ENCODE measurements at regions of chr1 and their contacts with region 1.

Region 1: GRCh38 chr1:212162635-212163034 is 122.6 kb upstream of the PPP2R5A start:
- DNase-seq: peak; percentile 31 to 76
- ATAC-seq: peak; percentile 32 to 69 (median 57)
- H3K4me3 ChIP-seq: no peak overlapping the region
- H3K27ac ChIP-seq: peak overlapping the region in 9 of 10 donors; percentile 3 to 81 (median 42)
- H3K4me1 ChIP-seq: peaks cover 5 to 52% (median 39%) of the 10 kb centered on the region in 9 donors
- H3K27me3 ChIP-seq: no peaks in the 10 kb centered on the region
- CTCF ChIP-seq: no peak

Region 2: GRCh38 chr1:212070720-212071302 is 91.8 kb before region 1 on chr1:
- intact Hi-C with region 1: loop called in 3 of 10 experiments (anchors 5 kb)
- DNase-seq: no peak
- ATAC-seq: peak; percentile 52 to 83 (median 58)
- H3K4me3 ChIP-seq: no peak overlapping the region
- H3K27ac ChIP-seq: peak overlapping the region in 2 of 10 donors; percentile 0 to 58
- H3K4me1 ChIP-seq: peaks cover 0 to 39% (median 9%) of the 10 kb centered on the region in 9 donors
- H3K27me3 ChIP-seq: no peaks in the 10 kb centered on the region
- CTCF ChIP-seq: peak; percentile 66 to 91 (median 81)

Region 3: GRCh38 chr1:212077051-212077450 is 85.6 kb before region 1 on chr1:
- intact Hi-C with region 1: loop called in 3 of 10 experiments (anchors 5 kb)
- DNase-seq: no peak
- ATAC-seq: peak in 1 of 8 donors; percentile 34
- H3K4me3 ChIP-seq: no peak overlapping the region
- H3K27ac ChIP-seq: no peak overlapping the region
- H3K4me1 ChIP-seq: peaks cover 0 to 27% (median 5%) of the 10 kb centered on the region in 9 donors
- H3K27me3 ChIP-seq: no peaks in the 10 kb centered on the region
- CTCF ChIP-seq: no peak

Region 4: GRCh38 chr1:212089560-212090163 is 73.0 kb before region 1 on chr1:
- intact Hi-C with region 1: loop called in 1 of 10 experiments (anchors 5 kb)
- DNase-seq: no peak
- ATAC-seq: no peak
- H3K4me3 ChIP-seq: no peak overlapping the region
- H3K27ac ChIP-seq: peak overlapping the region in 3 of 10 donors; percentile 11 to 78 (median 24)
- H3K4me1 ChIP-seq: peaks cover 0 to 35% (median 20%) of the 10 kb centered on the region in 9 donors
- H3K27me3 ChIP-seq: no peaks in the 10 kb centered on the region
- CTCF ChIP-seq: no peak

Region 5: GRCh38 chr1:212179394-212180076 is 16.9 kb after region 1 on chr1:
- intact Hi-C with region 1: no loop called
- DNase-seq: no peak
- ATAC-seq: peak in 2 of 8 donors; percentile 18 to 19
- H3K4me3 ChIP-seq: no peak overlapping the region
- H3K27ac ChIP-seq: peak overlapping the region in 1 of 10 donors; percentile 8
- H3K4me1 ChIP-seq: peaks cover 0 to 16% (median 3%) of the 10 kb centered on the region in 9 donors
- H3K27me3 ChIP-seq: no peaks in the 10 kb centered on the region
- CTCF ChIP-seq: no peak

Region 6: DNA sequence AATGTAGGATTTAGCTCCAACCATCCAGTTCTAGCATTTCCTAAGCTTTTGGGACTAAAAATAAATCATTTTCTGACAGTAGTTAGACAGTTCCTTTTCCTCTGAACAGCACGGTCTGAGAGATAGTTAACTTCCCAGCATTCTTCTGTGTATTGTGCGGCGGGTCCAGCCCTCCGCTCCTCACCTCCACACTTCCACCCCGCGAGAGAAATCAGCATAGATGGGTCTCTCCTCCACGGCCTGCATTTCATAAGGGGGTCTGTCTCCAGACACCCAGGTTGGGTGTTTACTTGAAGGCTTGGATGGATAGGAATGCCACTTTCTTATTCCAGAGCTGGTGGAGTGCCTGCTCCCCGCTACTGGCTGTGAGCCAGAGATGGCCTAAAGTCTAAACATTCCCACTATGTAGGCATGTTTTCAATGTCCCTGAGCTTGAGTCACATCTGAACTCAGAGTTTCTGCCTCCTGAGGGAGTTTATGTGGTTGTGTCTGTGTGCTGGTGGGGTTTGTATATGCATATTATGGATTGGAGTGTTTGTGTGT is 84.6 kb after region 1 on chr1:
- intact Hi-C with region 1: loop called in 1 of 10 experiments (anchors 10 kb)
- DNase-seq: no peak
- ATAC-seq: peak in 6 of 8 donors; percentile 39 to 63 (median 54)
- H3K4me3 ChIP-seq: no peak overlapping the region
- H3K27ac ChIP-seq: peak overlapping the region in 7 of 10 donors; percentile 0 to 51 (median 45)
- H3K4me1 ChIP-seq: peaks cover 2 to 45% (median 27%) of the 10 kb centered on the region in 9 donors
- H3K27me3 ChIP-seq: no peaks in the 10 kb centered on the region
- CTCF ChIP-seq: no peak

Region 7: GRCh38 chr1:212291505-212292134 is 129.0 kb after region 1 on chr1:
- intact Hi-C with region 1: loop called in 3 of 10 experiments (anchors 1 to 10 kb)
- DNase-seq: no peak
- ATAC-seq: peak; percentile 56 to 82 (median 74)
- H3K4me3 ChIP-seq: peak overlapping the region in 1 of 10 donors; percentile 9
- H3K27ac ChIP-seq: peak overlapping the region in 4 of 10 donors; percentile 4 to 98 (median 9)
- H3K4me1 ChIP-seq: peaks cover 0 to 100% (median 80%) of the 10 kb centered on the region in 9 donors
- H3K27me3 ChIP-seq: no peaks in the 10 kb centered on the region
- CTCF ChIP-seq: peak in 7 of 9 donors; percentile 54 to 78 (median 68)

Measured in heart right ventricle (tissue), 16 donors.